ENCODE measurements at regions of chr7 and their contacts with region 1.

Region 1: DNA sequence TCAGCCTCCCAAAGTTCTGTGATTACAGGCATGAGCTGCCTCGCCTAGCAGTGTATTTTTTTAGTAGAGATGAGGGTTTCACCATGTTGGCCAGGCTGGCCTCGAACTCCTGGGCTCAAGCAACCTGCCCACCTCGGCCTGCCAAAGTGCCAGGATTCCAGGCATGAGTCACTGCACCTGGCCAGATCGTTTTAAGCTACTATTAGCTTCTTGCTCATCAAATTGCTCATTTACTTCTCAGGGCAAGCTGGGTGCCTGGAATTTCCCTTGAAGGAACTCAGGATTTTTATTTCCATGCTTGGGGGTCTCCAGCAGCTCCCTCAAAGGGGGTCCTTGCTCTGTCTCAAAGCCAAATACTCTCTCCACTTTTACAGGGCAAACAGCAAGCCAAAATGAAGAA is 798.0 kb upstream of the AUTS2 start:
- DNase-seq: no peak
- H3K4me3 ChIP-seq: no peak overlapping the region
- H3K27ac ChIP-seq: no peak overlapping the region
- H3K27me3 ChIP-seq: no peaks in the 10 kb centered on the region
- CTCF ChIP-seq: no peak

Region 2: GRCh38 chr7:68828575-68828974 is 28.3 kb after region 1 on chr7:
- CTCF ChIA-PET with region 1: no interaction called
- POLR2A ChIA-PET with region 1: interaction called, 10 read pairs
- DNase-seq: no peak
- H3K4me3 ChIP-seq: no peak overlapping the region
- H3K27ac ChIP-seq: no peak overlapping the region
- H3K27me3 ChIP-seq: no peaks in the 10 kb centered on the region
- CTCF ChIP-seq: no peak

Region 3: DNA sequence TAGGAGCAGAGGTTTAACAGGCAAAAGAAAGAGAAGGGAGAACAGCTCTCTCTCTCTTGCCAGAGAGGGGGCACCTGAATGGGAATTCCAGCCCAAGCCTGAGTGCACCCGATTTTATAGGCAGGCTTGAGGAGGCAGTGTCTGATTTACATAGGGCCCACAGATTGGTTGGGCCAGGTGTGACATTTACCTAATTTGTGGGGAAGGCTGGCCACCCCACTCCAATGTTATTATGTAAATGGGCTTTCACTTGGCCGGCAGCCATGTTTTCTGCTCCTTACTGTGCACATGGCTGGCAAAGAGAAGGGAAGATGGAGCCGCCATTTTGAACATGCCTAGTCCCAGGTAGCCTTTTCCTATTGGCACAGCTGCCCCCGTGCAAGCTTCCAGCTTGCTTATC is 62.4 kb after region 1 on chr7:
- CTCF ChIA-PET with region 1: no interaction called
- POLR2A ChIA-PET with region 1: no interaction called
- DNase-seq: no peak
- H3K4me3 ChIP-seq: no peak overlapping the region
- H3K27ac ChIP-seq: no peak overlapping the region
- H3K27me3 ChIP-seq: no peaks in the 10 kb centered on the region
- CTCF ChIP-seq: no peak